ENCODE measurements at regions of chr9 and their contacts with region 1.

Region 1: DNA sequence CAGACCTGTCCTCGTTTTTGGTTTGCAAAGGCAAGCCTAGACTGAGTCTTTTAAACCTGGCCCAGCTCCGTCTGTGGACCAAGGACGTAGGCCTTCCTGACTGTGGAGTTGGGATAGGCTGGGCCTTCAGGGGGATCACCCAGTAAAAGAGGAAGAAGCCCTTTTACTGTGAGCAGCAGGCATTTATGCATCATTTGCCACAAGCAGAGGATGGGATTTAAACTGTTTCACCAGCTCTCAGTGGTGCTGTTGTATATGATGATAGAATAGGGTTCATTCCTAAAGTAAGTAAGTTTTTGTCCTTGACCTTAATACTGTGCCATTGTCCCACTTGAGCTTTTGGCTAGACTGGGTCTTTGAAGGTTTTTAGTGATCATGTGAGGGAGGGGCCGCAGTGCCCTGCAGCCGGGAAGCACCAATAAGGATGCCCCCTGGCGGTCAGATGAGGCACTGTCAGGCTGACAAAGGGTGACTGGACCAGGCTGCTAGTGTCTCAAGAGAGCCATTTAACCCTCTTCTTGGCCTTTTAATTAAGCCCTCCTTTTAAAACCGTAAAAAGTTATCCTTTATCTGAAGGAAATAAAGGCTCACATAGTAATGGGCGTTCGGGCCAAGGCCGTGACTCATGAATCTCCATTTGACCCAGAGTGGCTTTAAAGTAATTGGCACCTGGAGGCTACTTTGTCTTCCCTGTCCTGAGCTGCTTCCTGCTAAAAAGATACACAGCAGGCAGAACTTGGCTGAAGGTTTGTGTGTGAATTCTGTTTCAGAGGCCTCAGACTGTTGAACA is 74.0 kb downstream of the UBAP1 start:
- DNase-seq: peak; percentile 66
- H3K4me3 ChIP-seq: no peak overlapping the region
- H3K27ac ChIP-seq: no peak overlapping the region
- H3K4me1 ChIP-seq: no peaks in the 10 kb centered on the region
- H3K27me3 ChIP-seq: no peaks in the 10 kb centered on the region
- CTCF ChIP-seq: peak; percentile 98

Region 2: DNA sequence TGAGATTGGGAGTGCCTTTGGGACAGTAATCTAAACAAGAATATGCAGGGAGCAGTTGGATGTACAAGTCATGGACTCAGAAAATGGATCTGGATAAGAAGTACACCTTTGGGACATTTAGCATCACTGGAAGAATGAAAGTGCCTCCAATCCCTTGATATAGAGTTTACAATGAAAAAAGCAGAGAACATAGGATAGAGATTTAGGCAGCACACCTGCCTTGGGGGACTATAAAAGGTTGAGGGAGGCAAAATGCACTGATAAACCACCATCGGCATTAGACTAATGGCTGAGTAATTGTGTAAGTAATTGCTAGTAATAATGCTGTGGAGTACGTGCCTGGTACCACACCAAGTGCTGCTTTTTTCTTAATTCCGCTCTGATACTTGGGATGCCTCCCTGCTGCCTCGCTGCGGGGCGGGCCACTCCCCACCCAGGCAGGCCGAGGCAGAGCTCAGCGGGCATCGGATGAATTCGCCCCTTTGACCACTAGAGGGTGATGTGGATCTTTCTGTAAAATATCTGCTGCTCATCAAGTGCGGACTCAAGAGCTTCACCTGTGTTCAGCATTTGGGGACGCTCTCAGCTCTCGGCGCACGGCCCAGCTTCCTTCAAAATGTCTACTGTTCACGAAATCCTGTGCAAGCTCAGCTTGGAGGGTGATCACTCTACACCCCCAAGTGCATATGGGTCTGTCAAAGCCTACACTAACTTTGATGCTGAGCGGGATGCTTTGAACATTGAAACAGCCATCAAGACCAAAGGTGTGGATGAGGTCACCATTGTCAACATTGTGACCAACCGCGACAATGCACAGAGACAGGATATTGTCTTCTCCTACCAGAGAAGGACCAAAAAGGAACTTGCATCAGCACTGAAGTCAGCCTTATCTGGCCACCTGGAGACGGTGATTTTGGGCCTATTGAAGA is 628.9 kb before region 1 on chr9:
- CTCF ChIA-PET with region 1: interaction called, 3 read pairs
- POLR2A ChIA-PET with region 1: no interaction called
- intact Hi-C with region 1: loop called (anchors 5 kb)
- DNase-seq: peak; percentile 82
- H3K4me3 ChIP-seq: no peak overlapping the region
- H3K27ac ChIP-seq: no peak overlapping the region
- H3K4me1 ChIP-seq: no peaks in the 10 kb centered on the region
- H3K27me3 ChIP-seq: peaks cover 3% of the 10 kb centered on the region
- CTCF ChIP-seq: peak; percentile 77

Region 3: GRCh38 chr9:34126207-34127034 is 126.4 kb before region 1 on chr9 and contains the start of gene DCAF12:
- CTCF ChIA-PET with region 1: no interaction called
- POLR2A ChIA-PET with region 1: no interaction called
- intact Hi-C with region 1: loop called (anchors 5 kb)
- DNase-seq: peak; percentile 96
- H3K4me3 ChIP-seq: peak within 1 kb of the TSS; percentile 87
- H3K27ac ChIP-seq: peak within 1 kb of the TSS; percentile 88
- H3K4me1 ChIP-seq: peaks cover 12% of the 10 kb centered on the region
- H3K27me3 ChIP-seq: no peaks in the 10 kb centered on the region
- CTCF ChIP-seq: no peak
- total RNA-seq, gene DCAF12: 37.9 and 39.6 TPM in 2 replicates

Region 4: DNA sequence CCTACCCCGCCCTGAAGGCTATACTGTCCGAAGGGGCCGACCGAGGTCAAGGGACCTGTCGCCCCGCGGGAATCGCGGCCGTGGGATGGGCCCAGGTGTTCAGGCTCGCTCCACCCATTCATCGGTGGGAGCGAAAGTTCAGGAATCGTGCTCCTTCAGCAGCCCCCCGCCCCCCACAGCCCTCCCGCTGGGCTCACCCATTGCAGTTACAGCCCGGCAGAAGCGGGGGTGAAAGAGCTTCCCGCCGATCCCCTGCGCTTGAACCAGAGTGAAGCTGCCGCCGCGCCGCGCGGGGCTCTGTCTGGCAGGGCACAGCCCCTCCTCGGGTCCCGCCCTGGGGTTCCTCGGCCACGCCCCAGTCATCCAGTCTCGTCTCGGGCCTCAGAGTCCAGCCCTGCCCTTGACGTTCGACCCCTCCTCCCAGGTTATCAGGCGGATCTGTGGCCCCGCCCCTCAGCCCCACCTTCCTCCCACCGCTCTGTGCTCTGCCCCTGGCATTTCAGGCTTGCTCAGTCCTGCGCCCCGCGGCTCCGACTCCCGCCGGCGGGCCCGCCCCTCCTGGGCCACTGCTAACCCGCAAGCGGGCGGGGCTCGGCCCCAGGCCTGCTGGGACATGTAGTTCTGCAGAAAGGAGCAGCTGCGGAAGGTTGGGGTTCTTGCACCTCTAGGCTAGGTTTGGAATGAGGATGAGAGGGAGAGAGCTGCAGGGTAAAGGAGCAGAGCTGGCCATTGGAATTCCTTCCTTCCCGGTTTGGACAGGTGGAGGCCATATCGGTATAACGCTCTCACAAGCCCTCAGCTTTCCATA is 123.9 kb after region 1 on chr9 and contains the start of gene MYORG:
- CTCF ChIA-PET with region 1: no interaction called
- POLR2A ChIA-PET with region 1: no interaction called
- intact Hi-C with region 1: loop called (anchors 5 kb)
- DNase-seq: peak; percentile 95
- H3K4me3 ChIP-seq: peak within 1 kb of the TSS; percentile 67
- H3K27ac ChIP-seq: peak within 1 kb of the TSS; percentile 60
- H3K4me1 ChIP-seq: peaks cover 25% of the 10 kb centered on the region
- H3K27me3 ChIP-seq: no peaks in the 10 kb centered on the region
- CTCF ChIP-seq: no peak
- total RNA-seq, gene MYORG: 7.8 and 7.9 TPM in 2 replicates

Measured in A673 (cell line).